HCT116 (cell line): ENCODE measurements at regions of chr9 and their contacts with region 1.

Region 1: GRCh38 chr9:133485361-133486260 is 6.7 kb upstream of the SLC2A6 start:
- DNase-seq: no peak
- ATAC-seq: peak; percentile 52
- H3K4me3 ChIP-seq: no peak overlapping the region
- H3K27ac ChIP-seq: peak overlapping the region; percentile 41; the same call in 1 of the 2 replicates
- H3K4me1 ChIP-seq: peaks cover 17 to 22% of the 10 kb centered on the region in 2 experiments; a peak in 3 of 4 replicates
- H3K27me3 ChIP-seq: no peaks in the 10 kb centered on the region
- CTCF ChIP-seq: no peak; a peak in 1 of 6 replicates
- POLR2A ChIP-seq: no peak
- RAD21 ChIP-seq: no peak

Region 2: DNA sequence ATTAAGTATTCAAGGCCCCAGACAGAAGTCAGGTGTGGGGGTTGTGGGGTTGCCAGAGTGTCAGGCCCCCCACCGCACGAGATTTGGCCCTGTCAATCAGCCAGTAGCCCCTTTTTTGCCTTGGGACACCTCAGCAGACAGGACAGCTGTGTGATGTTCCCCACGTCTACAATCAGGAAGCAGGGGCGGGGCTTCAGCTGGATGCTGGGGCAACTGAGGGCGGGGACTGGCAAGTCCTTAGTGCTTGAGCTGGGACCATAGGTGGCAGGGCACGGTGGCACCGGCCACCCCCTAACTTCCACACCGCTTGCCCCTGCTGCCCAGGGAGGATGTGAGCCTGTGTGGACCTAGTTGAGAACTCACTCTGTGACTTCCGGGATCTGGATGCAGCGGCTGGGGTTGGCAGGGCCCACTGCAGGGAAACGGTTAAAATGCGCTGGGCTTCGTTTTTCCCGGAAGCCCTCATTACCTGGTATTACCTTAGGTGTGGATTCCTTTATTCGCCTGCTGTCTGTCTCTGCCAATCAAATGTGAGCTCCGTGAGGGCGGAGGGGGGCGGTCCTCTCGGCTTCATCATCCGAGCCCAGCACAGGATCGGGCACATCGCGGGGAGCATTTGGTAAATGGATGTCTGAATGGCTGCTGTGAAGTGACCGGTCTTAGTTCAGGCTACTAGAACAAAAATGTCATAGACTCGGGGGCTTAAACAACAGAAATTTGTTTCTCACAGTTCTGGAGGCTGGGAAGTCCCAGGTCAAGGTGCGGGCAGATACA is 462.3 kb before region 1 on chr9:
- CTCF ChIA-PET with region 1: interaction called, 12 read pairs
- POLR2A ChIA-PET with region 1: no interaction called
- RAD21 ChIA-PET with region 1: no interaction called
- intact Hi-C with region 1: loop called (anchors 1 kb)
- DNase-seq: no peak
- ATAC-seq: no peak
- H3K4me3 ChIP-seq: no peak overlapping the region
- H3K27ac ChIP-seq: no peak overlapping the region
- H3K4me1 ChIP-seq: peaks cover 0 to 3% of the 10 kb centered on the region in 2 experiments; a peak in 2 of 4 replicates
- H3K27me3 ChIP-seq: no peaks in the 10 kb centered on the region
- CTCF ChIP-seq: no peak
- POLR2A ChIP-seq: no peak
- RAD21 ChIP-seq: no peak

Region 3: DNA sequence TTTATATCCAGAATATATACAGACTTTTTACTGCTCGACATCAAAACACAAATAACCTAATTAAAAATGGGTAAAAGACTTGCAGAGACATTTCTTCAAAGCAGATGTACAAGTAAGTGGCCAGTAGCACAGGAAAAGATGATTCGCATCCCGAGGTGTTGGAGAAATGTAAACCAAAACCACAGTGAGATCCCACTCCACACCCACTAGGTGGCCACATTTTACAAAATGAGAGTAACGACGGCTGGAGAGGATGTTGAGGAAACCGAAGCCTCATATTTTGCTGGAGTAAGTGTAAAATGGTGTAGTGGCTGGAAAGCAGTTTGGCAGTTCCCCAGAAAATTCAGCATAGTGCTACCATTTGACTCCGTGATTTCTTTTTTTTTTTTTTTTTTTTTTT is 300.6 kb before region 1 on chr9:
- CTCF ChIA-PET with region 1: interaction called, 15 read pairs
- POLR2A ChIA-PET with region 1: no interaction called
- RAD21 ChIA-PET with region 1: no interaction called
- intact Hi-C with region 1: loop called (anchors 1 kb)
- DNase-seq: peak; percentile 64
- ATAC-seq: peak; percentile 68
- H3K4me3 ChIP-seq: 0 out of 4 replicates have a peak overlapping the region, but pooled peaks of 1 of the 2 experiments have one; percentile 3
- H3K27ac ChIP-seq: no peak overlapping the region
- H3K4me1 ChIP-seq: peaks cover 7 to 24% of the 10 kb centered on the region in 2 experiments; a peak in 3 of 4 replicates
- H3K27me3 ChIP-seq: no peaks in the 10 kb centered on the region
- CTCF ChIP-seq: peak; percentile 62 to 84 (median 69)
- POLR2A ChIP-seq: no peak
- RAD21 ChIP-seq: peak; percentile 82

Region 4: DNA sequence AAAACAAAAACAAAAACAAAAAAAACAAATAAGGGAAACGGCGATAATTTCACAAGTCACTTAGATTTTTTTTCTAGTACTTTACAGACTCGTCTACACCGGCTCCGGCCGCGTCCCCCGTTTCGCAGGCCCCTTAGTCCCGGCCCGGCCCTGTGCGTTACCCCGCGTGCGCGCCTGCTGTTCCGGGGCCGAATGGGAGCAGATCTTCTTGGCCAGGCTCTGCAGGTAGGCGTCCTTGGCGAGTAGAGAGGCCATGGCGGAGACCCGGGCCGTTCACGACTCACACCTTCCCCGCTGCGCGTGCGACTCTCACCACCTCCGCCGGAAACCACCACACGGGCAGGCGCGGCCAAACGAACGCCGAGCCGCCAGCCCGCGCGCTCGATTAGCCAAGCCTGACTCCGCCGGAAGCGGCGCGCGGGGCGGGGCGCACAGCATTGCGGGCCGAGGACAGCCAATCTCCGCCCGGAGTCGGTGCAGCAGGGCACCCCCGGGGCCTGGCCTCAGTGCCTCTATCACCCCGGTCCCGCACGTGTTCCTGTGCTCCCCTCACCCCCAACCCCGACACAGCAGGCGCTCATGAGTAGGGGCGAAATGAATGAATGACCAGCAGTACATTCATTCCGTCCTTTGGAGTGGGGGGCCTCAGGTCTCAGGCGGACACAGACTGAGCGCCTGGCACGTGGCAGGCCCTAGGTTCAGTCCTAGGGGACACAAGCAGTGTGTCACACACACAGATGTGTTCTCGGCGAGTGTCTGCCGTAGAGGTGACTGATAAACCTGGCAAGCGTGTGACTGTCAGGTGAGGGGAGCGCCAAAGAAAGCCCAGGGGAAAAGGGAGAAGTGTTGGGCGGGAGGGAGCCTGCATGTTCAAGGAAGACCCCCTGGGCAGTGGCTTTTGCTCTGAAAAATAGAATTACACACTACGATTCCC is 149.5 kb before region 1 on chr9 and contains the start of gene SURF6:
- CTCF ChIA-PET with region 1: no interaction called
- POLR2A ChIA-PET with region 1: no interaction called
- RAD21 ChIA-PET with region 1: no interaction called
- intact Hi-C with region 1: loop called (anchors 5 kb)
- DNase-seq: peak; percentile 81
- ATAC-seq: peak; percentile 93
- H3K4me3 ChIP-seq: peak within 1 kb of the TSS; percentile 91 to 99
- H3K27ac ChIP-seq: peak within 1 kb of the TSS; percentile 91
- H3K4me1 ChIP-seq: peaks cover 12 to 26% of the 10 kb centered on the region in 2 experiments
- H3K27me3 ChIP-seq: no peaks in the 10 kb centered on the region
- CTCF ChIP-seq: no peak
- POLR2A ChIP-seq: no peak
- RAD21 ChIP-seq: peak; percentile 13; the same call in 1 of the 2 replicates
- total RNA-seq, gene SURF6: 30.1 TPM

Region 5: DNA sequence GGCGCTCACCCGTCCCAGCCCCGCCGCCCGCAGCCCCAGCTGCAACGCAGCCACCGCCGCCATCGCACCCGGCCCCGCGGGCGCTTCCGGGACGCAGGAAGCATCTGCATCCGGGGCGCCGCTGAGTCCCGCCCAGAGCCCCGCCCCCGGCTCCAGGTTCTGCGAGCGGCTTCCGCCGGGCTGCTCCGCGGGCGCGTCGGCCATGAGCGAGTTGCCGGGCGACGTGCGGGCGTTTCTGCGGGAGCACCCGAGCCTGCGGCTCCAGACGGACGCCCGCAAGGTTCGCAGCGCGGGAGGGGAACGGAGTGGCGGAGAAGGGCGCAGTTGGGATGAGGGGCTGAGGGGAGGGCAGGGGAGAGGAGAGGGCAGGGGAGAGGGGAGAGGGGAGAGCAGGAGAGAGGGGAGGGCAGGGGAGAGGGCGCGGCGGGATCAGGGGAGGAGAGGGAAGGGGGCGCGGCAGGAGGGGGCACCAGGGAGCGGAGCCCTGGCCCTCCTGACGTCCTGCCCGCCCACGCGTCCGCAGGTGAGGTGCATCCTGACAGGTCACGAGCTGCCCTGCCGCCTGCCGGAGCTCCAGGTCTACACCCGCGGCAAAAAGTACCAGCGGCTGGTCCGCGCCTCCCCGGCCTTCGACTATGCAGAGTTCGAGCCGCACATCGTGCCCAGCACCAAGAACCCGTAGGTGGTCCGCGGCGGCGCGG is 129.1 kb before region 1 on chr9 and contains the starts of genes SURF1 and SURF2:
- CTCF ChIA-PET with region 1: interaction called, 4 read pairs
- POLR2A ChIA-PET with region 1: no interaction called
- RAD21 ChIA-PET with region 1: no interaction called
- intact Hi-C with region 1: loop called (anchors 5 kb)
- DNase-seq: no peak
- ATAC-seq: peak; percentile 78
- H3K4me3 ChIP-seq: peak within 1 kb of the TSS; percentile 87 to 96
- H3K27ac ChIP-seq: peak within 1 kb of the TSS; percentile 61
- H3K4me1 ChIP-seq: peaks cover 7 to 24% of the 10 kb centered on the region in 2 experiments; a peak in 3 of 4 replicates
- H3K27me3 ChIP-seq: no peaks in the 10 kb centered on the region
- CTCF ChIP-seq: peak in 2 of 3 experiments; percentile 11 to 19; a peak in 1 of 6 replicates
- POLR2A ChIP-seq: peak; percentile 94
- RAD21 ChIP-seq: no peak
- total RNA-seq, gene SURF1: 71.7 TPM
- total RNA-seq, gene SURF2: 27.8 TPM

Region 6: GRCh38 chr9:133406480-133407307 is 78.9 kb before region 1 on chr9:
- CTCF ChIA-PET with region 1: interaction called, 3 read pairs
- POLR2A ChIA-PET with region 1: no interaction called
- RAD21 ChIA-PET with region 1: no interaction called
- intact Hi-C with region 1: loop called (anchors 1 kb)
- DNase-seq: peak; percentile 47
- ATAC-seq: peak; percentile 85
- H3K4me3 ChIP-seq: no peak overlapping the region
- H3K27ac ChIP-seq: no peak overlapping the region
- H3K4me1 ChIP-seq: peaks cover 0 to 5% of the 10 kb centered on the region in 2 experiments; a peak in 1 of 4 replicates
- H3K27me3 ChIP-seq: no peaks in the 10 kb centered on the region
- CTCF ChIP-seq: peak; percentile 81 to 96 (median 93)
- POLR2A ChIP-seq: no peak
- RAD21 ChIP-seq: peak; percentile 67

Region 7: DNA sequence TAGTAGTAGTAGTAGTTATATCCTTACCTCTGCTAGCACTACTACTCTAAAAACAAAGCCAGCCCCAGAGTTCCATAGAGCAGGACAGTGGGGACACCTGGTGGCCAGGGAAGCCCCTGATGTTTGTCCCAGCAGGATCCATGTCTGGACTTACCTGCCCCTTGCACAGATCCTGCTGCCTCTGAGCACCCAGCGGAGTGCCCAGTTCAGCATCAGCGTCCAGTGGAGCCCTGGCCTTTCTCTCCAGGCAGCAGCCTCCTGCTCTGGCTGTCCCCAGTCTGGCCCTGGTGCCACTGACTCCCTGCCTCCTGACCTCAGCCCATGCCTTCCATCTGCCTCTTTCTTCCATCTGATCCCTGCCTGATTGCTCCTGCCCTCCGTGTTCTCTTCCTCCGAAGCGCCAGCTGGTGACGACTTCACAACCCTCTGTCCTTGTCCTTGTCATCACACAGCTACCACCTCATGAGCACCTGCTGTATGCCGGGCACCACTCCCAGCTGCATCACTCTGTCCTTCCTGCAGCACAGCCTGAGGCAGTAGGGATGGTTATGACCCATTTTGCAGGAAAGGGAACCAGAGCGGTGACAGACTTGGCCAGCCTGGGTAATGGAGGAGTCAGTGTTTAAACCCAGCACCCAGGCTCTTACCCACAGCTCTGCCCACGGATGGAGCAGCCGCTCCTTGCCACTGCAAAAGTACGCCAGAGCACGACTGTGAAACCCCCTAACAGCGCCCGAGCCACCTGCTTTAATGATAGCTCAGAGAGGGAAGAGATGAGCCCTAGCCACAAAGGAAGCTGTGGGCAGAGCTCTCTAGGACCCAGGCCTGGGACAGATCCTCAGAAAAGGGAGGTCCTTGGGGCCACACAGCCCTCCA is 241.0 kb after region 1 on chr9:
- CTCF ChIA-PET with region 1: interaction called, 3 read pairs
- POLR2A ChIA-PET with region 1: no interaction called
- RAD21 ChIA-PET with region 1: no interaction called
- intact Hi-C with region 1: loop called (anchors 1 kb)
- DNase-seq: peak; percentile 38
- ATAC-seq: peak; percentile 87
- H3K4me3 ChIP-seq: no peak overlapping the region
- H3K27ac ChIP-seq: no peak overlapping the region
- H3K4me1 ChIP-seq: peaks cover 0 to 5% of the 10 kb centered on the region in 2 experiments; a peak in 2 of 4 replicates
- H3K27me3 ChIP-seq: 0 out of 2 replicates have a peak, but pooled peaks cover 12% of the 10 kb centered on the region
- CTCF ChIP-seq: peak; percentile 61 to 76 (median 74)
- POLR2A ChIP-seq: no peak
- RAD21 ChIP-seq: peak; percentile 86